Heart left ventricle (tissue), 16 donors: ENCODE measurements at regions of chr6 and their contacts with region 1.

Region 1: DNA sequence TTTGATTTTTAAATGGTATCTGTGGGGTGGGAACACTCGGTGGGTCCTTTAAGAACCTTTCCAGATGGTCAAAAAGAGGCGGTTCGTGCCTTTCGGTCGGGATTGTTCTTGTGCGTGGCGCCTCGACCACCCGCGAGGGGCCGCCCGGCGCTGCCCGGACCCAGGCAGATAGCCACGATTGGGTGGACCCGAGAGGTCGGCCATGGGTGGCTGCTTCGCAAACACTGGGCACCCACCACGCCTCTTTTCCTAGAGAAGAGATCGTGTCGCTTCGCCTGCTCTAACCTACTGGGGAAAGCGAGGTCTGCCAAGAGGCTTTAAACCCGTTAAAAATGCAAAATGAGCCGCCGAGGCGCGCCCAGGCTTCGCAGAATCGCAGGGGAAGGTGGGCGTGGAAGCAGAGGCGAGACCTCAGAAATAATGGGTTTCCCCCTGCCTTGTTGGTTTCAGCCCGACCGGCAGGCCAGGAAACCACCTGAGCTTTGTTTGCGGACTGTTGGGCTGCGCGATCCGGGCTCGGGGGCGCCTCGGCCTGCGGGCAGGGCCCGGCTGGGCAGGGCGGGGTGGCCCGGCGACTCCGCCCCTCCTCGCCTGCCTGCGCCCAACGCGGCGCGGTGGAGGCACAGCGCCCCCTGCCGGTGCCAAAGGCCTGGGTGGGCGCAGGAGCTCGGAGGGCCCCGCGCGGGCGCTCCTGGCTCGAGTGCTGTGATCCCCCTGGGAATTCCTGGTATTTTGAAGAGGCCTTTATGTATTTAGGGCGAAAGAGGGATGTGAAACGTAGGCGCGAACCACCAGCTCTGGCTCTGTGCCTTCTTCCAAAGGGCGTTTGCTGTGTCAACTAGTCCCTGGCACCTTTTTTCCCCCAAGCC is 1.6 kb downstream of the MARCKS start:
- DNase-seq: peak; percentile 82 to 95 (median 89)
- ATAC-seq: peak; percentile 80 to 95 (median 88)
- H3K4me3 ChIP-seq: peak overlapping the region; percentile 59 to 91 (median 70)
- H3K27ac ChIP-seq: peak overlapping the region; percentile 85 to 96 (median 92)
- H3K4me1 ChIP-seq: peaks cover 0 to 46% (median 10%) of the 10 kb centered on the region in 12 donors
- H3K27me3 ChIP-seq: peaks cover 0 to 15% (median 0%) of the 10 kb centered on the region in 9 donors
- CTCF ChIP-seq: peak; percentile 84 to 99 (median 95)
- POLR2A ChIP-seq: peak in 1 of 2 donors; percentile 76

Region 2: GRCh38 chr6:112780498-112781096 is 1078.1 kb before region 1 on chr6:
- intact Hi-C with region 1: loop called in 9 of 10 experiments (anchors 1 to 10 kb)
- DNase-seq: peak; percentile 52 to 79 (median 66)
- ATAC-seq: peak in 3 of 4 donors; percentile 86 to 93 (median 91)
- H3K4me3 ChIP-seq: no peak overlapping the region
- H3K27ac ChIP-seq: no peak overlapping the region
- H3K4me1 ChIP-seq: peaks cover 0 to 4% (median 0%) of the 10 kb centered on the region in 12 donors
- H3K27me3 ChIP-seq: no peaks in the 10 kb centered on the region
- CTCF ChIP-seq: peak; percentile 74 to 94 (median 84)
- POLR2A ChIP-seq: no peak

Region 3: DNA sequence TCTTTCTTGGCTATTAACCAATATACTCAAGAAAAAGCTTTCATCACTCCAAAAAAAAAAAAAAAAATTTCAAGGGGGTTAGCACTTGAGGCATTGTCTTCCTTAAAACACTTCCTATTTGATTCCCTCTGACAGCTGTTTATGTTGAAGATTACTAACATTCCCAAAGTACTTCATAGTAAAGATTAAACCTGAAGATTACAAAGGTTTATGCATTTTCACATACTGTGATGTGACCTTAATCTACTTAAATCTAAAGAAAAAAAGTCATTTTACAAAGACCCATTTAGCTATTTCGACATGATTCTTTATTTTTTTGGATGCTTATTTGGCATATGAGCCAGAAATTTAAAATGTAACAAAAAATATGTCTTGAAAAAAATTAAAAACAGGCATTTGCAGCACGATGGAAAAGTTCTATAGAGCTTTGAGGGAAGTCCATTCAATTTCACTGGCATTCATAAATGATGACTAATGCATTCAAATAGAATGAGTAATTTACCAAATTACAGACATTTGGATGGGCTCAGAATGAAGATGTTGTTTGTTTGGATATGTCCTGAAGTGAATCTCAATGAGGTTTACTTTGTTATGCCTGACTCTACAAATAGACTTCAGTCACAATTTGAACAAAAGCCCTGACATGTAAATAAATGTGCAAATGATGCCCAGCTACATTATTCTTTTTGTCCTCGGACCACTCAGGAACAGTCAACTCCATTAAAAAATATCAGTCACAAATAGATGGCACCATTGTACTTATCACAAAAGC is 676.2 kb before region 1 on chr6:
- intact Hi-C with region 1: loop called in 1 of 10 experiments (anchors 10 kb)
- DNase-seq: no peak
- ATAC-seq: no peak
- H3K4me3 ChIP-seq: no peak overlapping the region
- H3K27ac ChIP-seq: peak overlapping the region in 1 of 12 donors; percentile 39
- H3K4me1 ChIP-seq: peaks cover 0 to 17% (median 7%) of the 10 kb centered on the region in 12 donors
- H3K27me3 ChIP-seq: no peaks in the 10 kb centered on the region
- CTCF ChIP-seq: no peak
- POLR2A ChIP-seq: no peak

Region 4: DNA sequence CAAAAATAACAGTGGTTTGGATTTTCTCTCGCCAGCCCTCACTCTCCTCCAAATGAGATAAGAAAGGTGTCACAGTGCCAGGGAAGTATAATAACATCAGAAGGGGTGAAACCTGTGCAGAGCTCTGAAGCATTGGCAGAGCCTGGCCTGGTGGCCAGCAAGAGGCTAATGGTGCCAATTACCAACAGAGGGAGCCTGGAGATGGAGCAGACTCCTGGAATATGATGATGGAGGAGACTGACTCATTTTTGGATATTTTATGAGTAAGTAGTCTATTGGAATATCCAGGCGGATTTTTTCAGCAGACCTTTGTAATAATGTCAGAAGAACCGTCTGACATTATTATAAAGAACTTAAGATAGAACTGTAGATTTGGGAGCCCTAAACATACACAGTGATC is 444.2 kb before region 1 on chr6:
- intact Hi-C with region 1: loop called in 9 of 10 experiments (anchors 1 to 10 kb)
- DNase-seq: peak in 4 of 5 donors; percentile 19 to 42 (median 34)
- ATAC-seq: peak in 3 of 4 donors; percentile 70 to 84 (median 81)
- H3K4me3 ChIP-seq: no peak overlapping the region
- H3K27ac ChIP-seq: no peak overlapping the region
- H3K4me1 ChIP-seq: peaks cover 0 to 14% (median 0%) of the 10 kb centered on the region in 12 donors
- H3K27me3 ChIP-seq: no peaks in the 10 kb centered on the region
- CTCF ChIP-seq: peak; percentile 21 to 69 (median 53)
- POLR2A ChIP-seq: no peak

Region 5: GRCh38 chr6:113732384-113732966 is 126.2 kb before region 1 on chr6:
- intact Hi-C with region 1: loop called in 6 of 10 experiments (anchors 2 to 10 kb)
- DNase-seq: peak; percentile 37 to 68 (median 53)
- ATAC-seq: peak; percentile 94 to 99 (median 94)
- H3K4me3 ChIP-seq: peak overlapping the region in 5 of 12 donors; percentile 0 to 12 (median 1)
- H3K27ac ChIP-seq: peak overlapping the region in 9 of 12 donors; percentile 5 to 63 (median 32)
- H3K4me1 ChIP-seq: peaks cover 0 to 26% (median 15%) of the 10 kb centered on the region in 12 donors
- H3K27me3 ChIP-seq: no peaks in the 10 kb centered on the region
- CTCF ChIP-seq: peak in 5 of 12 donors; percentile 17 to 47 (median 33)
- POLR2A ChIP-seq: no peak

Region 6: DNA sequence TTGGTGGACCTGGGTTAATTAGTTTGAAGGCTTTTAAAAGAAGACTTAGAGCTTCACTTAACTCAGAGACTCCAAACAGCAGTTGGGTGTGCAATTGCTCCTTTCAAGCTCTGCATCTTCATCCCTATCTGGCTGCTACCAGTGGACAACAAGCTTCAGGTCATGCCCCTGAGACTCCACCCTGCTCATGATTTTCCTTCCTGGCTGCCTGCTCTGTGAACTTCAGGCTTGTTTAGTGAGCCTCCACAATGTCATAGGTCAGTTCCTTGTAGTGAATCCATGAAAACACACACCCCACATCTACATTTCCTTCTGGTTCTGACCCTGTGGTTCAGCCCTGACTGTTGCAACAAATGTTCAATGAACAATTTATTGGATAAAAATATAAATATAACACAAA is 62.7 kb before region 1 on chr6:
- intact Hi-C with region 1: no loop called
- DNase-seq: no peak
- ATAC-seq: no peak
- H3K4me3 ChIP-seq: no peak overlapping the region
- H3K27ac ChIP-seq: no peak overlapping the region
- H3K4me1 ChIP-seq: no peaks in the 10 kb centered on the region
- H3K27me3 ChIP-seq: no peaks in the 10 kb centered on the region
- CTCF ChIP-seq: no peak
- POLR2A ChIP-seq: no peak

Region 7: GRCh38 chr6:113842153-113842552 is 16.6 kb before region 1 on chr6:
- intact Hi-C with region 1: no loop called
- DNase-seq: no peak
- ATAC-seq: no peak
- H3K4me3 ChIP-seq: no peak overlapping the region
- H3K27ac ChIP-seq: no peak overlapping the region
- H3K4me1 ChIP-seq: no peaks in the 10 kb centered on the region
- H3K27me3 ChIP-seq: no peaks in the 10 kb centered on the region
- CTCF ChIP-seq: no peak
- POLR2A ChIP-seq: no peak

Region 8: GRCh38 chr6:113920663-113921267 is 62.1 kb after region 1 on chr6:
- intact Hi-C with region 1: loop called in 1 of 10 experiments (anchors 5 kb)
- DNase-seq: peak in 1 of 5 donors; percentile 31
- ATAC-seq: peak in 2 of 4 donors; percentile 39 to 59
- H3K4me3 ChIP-seq: no peak overlapping the region
- H3K27ac ChIP-seq: peak overlapping the region in 11 of 12 donors; percentile 1 to 75 (median 31)
- H3K4me1 ChIP-seq: peaks cover 0 to 42% (median 21%) of the 10 kb centered on the region in 12 donors
- H3K27me3 ChIP-seq: no peaks in the 10 kb centered on the region
- CTCF ChIP-seq: no peak
- POLR2A ChIP-seq: no peak